AG04450 (cell line): ENCODE measurements at regions of chr4 and their contacts with region 1.

Region 1: DNA sequence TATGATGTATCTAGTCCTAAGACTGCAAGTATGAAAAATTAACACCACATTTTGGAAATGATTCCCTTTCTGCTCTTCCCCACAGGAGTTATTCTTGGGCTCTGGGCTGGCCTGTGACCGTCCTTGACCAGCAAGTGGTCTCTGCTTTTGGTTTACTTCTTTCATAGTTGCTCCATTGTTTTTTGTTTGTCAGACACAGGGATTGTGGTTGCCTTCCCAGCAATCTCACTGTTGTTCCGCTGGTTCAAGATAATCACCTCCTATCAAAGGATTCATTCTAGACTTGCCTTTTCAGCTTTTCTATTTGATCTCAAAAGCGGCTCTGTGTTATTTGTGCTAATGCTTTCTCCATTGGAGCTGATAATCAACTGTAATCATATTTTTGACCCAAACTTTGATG is 218.8 kb downstream of the MGST2 start:
- DNase-seq: no peak
- H3K4me3 ChIP-seq: no peak overlapping the region
- H3K27ac ChIP-seq: no peak overlapping the region
- H3K27me3 ChIP-seq: no peaks in the 10 kb centered on the region
- CTCF ChIP-seq: no peak

Region 2: GRCh38 chr4:140094438-140095420 is 210.3 kb after region 1 on chr4:
- CTCF ChIA-PET with region 1: interaction called, 11 read pairs
- POLR2A ChIA-PET with region 1: no interaction called
- DNase-seq: no peak
- H3K4me3 ChIP-seq: no peak overlapping the region; the same call in 1 of the 2 replicates
- H3K27ac ChIP-seq: peak overlapping the region; percentile 82
- H3K27me3 ChIP-seq: no peaks in the 10 kb centered on the region
- CTCF ChIP-seq: no peak